Mammary epithelial cell (primary cell): ENCODE measurements at regions of chr5 and their contacts with region 1.

Region 1: DNA sequence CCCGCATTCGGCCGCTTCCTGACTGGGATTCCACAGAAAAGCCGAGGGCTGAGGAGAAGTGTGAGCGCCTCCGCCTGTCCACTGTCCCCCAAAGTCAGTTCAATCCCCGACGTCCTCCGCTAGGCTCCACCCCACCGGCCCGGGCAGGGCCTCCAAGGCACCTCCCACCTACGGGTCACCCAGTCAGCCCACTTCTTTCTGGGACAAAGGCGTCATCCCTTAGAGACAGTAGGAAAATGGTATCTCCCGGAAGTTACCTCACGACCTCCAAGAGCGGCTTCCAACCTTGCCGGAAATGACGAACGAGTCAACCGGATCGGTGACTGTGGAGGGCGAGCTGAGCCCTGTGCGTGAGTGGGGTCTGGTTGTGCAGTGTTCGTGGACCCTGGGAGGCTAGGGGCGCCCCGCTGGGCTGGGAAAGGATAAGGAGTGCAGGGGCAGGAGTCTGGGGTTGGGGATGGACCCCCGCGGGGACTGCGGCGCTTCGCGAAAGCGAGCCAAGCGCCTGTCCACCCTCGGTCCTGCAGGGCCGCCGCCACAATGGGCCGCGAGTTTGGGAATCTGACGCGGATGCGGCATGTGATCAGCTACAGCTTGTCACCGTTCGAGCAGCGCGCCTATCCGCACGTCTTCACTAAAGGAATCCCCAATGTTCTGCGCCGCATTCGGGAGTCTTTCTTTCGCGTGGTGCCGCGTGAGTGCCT is at the starts of genes GDF9 and UQCRQ:
- DNase-seq: peak; percentile 99
- H3K4me3 ChIP-seq: peak within 1 kb of the TSS; percentile 71 to 90 (median 88)
- H3K27ac ChIP-seq: peak within 1 kb of the TSS; percentile 77
- H3K4me1 ChIP-seq: no peaks in the 10 kb centered on the region
- H3K27me3 ChIP-seq: no peaks in the 10 kb centered on the region
- CTCF ChIP-seq: peak in 1 of 2 donors; percentile 50
- total RNA-seq, gene GDF9: 0.50 to 0.66 TPM
- total RNA-seq, gene UQCRQ: 45.3 to 461 TPM

Region 2: GRCh38 chr5:132736853-132737833 is 129.4 kb before region 1 on chr5 and contains the start of gene KIF3A:
- CTCF ChIA-PET with region 1: no interaction called
- dilution Hi-C with region 1: no loop called
- in situ Hi-C with region 1: no loop called
- intact Hi-C with region 1: loop called (anchors 5 kb)
- DNase-seq: peak; percentile 96
- H3K4me3 ChIP-seq: peak within 1 kb of the TSS; percentile 79 to 95 (median 91)
- H3K27ac ChIP-seq: peak within 1 kb of the TSS; percentile 66
- H3K4me1 ChIP-seq: peaks cover 24% of the 10 kb centered on the region
- H3K27me3 ChIP-seq: no peaks in the 10 kb centered on the region
- CTCF ChIP-seq: no peak
- total RNA-seq, gene KIF3A: 11.3 to 28.5 TPM